PC-3 (cell line): ENCODE measurements at regions of chr10 and their contacts with region 1.

Region 1: GRCh38 chr10:71899665-71900412 is 48.8 kb upstream of the PSAP start:
- DNase-seq: no peak
- ATAC-seq: no peak
- H3K4me3 ChIP-seq: no peak overlapping the region
- H3K27ac ChIP-seq: no peak overlapping the region
- H3K4me1 ChIP-seq: no peaks in the 10 kb centered on the region
- H3K27me3 ChIP-seq: no peaks in the 10 kb centered on the region
- CTCF ChIP-seq: no peak

Region 2: GRCh38 chr10:71486484-71487114 is 413.2 kb before region 1 on chr10:
- CTCF ChIA-PET with region 1: no interaction called
- POLR2A ChIA-PET with region 1: no interaction called
- intact Hi-C with region 1: no loop called
- DNase-seq: peak; percentile 50
- ATAC-seq: peak; percentile 33; the same call in 1 of the 2 replicates
- H3K4me3 ChIP-seq: no peak overlapping the region
- H3K27ac ChIP-seq: no peak overlapping the region
- H3K4me1 ChIP-seq: no peaks in the 10 kb centered on the region
- H3K27me3 ChIP-seq: peaks cover 13% of the 10 kb centered on the region
- CTCF ChIP-seq: peak; percentile 67

Region 3: GRCh38 chr10:71831646-71832552 is 67.9 kb before region 1 on chr10:
- CTCF ChIA-PET with region 1: interaction called, 6 read pairs
- POLR2A ChIA-PET with region 1: no interaction called
- intact Hi-C with region 1: loop called (anchors 5 kb)
- DNase-seq: peak; percentile 67
- ATAC-seq: peak; percentile 100
- H3K4me3 ChIP-seq: no peak overlapping the region
- H3K27ac ChIP-seq: peak overlapping the region; percentile 54
- H3K4me1 ChIP-seq: peaks cover 13% of the 10 kb centered on the region
- H3K27me3 ChIP-seq: no peaks in the 10 kb centered on the region
- CTCF ChIP-seq: peak; percentile 25; the same call in 1 of the 2 replicates

Region 4: GRCh38 chr10:71845410-71846405 is 54.1 kb before region 1 on chr10:
- CTCF ChIA-PET with region 1: no interaction called
- POLR2A ChIA-PET with region 1: no interaction called
- intact Hi-C with region 1: no loop called
- DNase-seq: no peak
- ATAC-seq: no peak
- H3K4me3 ChIP-seq: no peak overlapping the region
- H3K27ac ChIP-seq: no peak overlapping the region
- H3K4me1 ChIP-seq: peaks cover 17% of the 10 kb centered on the region; the same call in 1 of the 2 replicates
- H3K27me3 ChIP-seq: no peaks in the 10 kb centered on the region
- CTCF ChIP-seq: no peak

Region 5: DNA sequence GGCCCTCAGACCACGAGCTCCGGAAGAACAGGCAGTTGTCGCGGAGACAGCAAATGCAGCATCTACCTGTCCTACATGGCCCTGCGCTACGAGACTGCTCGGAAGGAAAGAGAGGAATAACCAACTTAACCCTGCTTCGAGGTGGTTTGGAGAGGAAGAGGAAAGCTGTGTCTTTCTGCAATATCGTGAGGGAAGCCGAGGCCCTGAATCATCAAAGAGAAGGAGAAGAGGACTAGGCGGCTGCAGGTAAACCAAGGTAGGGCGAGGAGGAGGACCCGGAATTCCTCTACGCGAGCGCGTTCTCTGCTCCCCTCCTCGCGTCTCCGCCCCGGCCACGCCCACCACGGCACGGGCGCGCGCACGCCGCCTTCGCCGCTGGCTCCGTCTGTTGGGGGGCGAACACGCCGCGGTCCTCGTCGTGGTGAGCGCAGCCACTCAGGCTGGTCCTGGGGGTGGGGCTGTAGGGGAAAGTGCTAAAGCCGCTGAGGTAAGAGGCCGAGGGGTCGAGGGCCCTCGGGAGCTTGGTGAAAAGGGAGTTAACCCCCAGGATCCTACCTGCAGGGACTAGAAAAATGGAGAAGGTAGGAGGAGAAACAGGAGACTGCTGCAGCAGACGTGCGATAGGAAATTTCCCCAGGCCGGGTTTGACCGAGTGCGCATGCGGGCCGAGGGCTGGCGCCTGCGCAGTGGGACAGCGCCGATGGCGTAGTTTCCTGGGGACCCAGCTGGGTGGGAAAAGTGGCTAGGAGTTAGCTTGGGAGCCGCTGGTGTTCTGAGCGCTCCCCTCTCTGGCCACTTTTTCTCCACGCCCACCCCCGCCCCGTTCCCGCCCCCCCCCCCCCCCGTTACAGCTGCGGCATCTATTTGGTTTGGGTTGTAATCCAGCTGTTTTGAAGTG is 316.1 kb after region 1 on chr10 and contains the starts of genes ANAPC16 and ASCC1:
- CTCF ChIA-PET with region 1: no interaction called
- POLR2A ChIA-PET with region 1: no interaction called
- intact Hi-C with region 1: no loop called
- DNase-seq: peak; percentile 88
- ATAC-seq: peak; percentile 85
- H3K4me3 ChIP-seq: peak within 1 kb of the TSS; percentile 98
- H3K27ac ChIP-seq: peak within 1 kb of the TSS; percentile 96
- H3K4me1 ChIP-seq: peaks cover 19% of the 10 kb centered on the region; the same call in 1 of the 2 replicates
- H3K27me3 ChIP-seq: no peaks in the 10 kb centered on the region
- CTCF ChIP-seq: no peak
- total RNA-seq, gene ANAPC16: 19.2 and 23.9 TPM in 2 replicates
- total RNA-seq, gene ASCC1: 15.7 and 24.3 TPM in 2 replicates